ENCODE measurements at regions of chr12 and their contacts with region 1.

Region 1: DNA sequence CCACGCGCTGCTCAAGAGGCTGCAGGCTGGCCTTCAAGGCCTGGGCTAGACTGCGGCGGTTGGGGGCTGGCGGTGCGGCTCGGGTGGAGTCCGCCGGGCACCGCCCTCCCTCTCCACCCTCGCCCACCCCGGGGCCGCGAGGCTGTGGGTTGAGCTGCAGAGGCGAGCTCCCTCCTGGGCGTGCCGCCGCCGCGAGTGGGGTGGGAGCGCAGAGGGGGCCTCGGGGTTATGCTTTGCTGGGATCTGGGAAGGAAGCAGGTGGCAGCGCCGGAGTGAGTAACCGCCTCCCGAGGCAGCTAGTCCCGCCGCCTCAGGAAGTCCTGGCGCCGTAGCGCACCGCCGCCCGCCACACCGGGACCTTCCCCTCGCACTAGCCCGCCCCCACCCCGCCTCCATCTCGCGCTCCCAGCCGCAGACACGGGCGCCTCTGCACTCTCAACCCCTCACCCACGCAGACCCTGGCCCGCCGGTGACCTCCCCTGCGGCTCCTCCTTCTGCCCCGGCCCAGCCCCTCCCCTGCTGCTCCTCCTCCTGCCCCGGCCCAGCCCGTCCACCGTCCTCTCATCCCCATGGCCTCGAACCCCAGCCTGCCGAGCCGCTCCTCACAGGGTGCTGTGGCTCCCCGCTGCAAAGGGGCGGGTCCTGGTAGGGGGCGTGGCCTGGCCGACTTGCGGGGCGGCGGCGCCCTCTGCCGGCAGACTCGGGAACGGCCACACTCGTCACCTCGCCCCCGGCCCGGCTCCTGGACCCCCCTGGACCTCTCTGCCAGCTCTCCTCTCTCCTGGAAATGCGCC is 16.6 kb downstream of the TAMALIN start:
- DNase-seq: peak; percentile 36
- H3K4me3 ChIP-seq: peak overlapping the region; percentile 47 to 54 (median 50)
- H3K27ac ChIP-seq: no peak overlapping the region
- H3K4me1 ChIP-seq: peaks cover 17% of the 10 kb centered on the region
- H3K27me3 ChIP-seq: no peaks in the 10 kb centered on the region
- CTCF ChIP-seq: peak; percentile 58 to 96

Region 2: GRCh38 chr12:51579321-51579850 is 444.0 kb before region 1 on chr12:
- CTCF ChIA-PET with region 1: no interaction called
- dilution Hi-C with region 1: no loop called
- in situ Hi-C with region 1: no loop called
- intact Hi-C with region 1: no loop called
- DNase-seq: no peak
- H3K4me3 ChIP-seq: no peak overlapping the region
- H3K27ac ChIP-seq: no peak overlapping the region
- H3K4me1 ChIP-seq: no peaks in the 10 kb centered on the region
- H3K27me3 ChIP-seq: no peaks in the 10 kb centered on the region
- CTCF ChIP-seq: no peak

Region 3: DNA sequence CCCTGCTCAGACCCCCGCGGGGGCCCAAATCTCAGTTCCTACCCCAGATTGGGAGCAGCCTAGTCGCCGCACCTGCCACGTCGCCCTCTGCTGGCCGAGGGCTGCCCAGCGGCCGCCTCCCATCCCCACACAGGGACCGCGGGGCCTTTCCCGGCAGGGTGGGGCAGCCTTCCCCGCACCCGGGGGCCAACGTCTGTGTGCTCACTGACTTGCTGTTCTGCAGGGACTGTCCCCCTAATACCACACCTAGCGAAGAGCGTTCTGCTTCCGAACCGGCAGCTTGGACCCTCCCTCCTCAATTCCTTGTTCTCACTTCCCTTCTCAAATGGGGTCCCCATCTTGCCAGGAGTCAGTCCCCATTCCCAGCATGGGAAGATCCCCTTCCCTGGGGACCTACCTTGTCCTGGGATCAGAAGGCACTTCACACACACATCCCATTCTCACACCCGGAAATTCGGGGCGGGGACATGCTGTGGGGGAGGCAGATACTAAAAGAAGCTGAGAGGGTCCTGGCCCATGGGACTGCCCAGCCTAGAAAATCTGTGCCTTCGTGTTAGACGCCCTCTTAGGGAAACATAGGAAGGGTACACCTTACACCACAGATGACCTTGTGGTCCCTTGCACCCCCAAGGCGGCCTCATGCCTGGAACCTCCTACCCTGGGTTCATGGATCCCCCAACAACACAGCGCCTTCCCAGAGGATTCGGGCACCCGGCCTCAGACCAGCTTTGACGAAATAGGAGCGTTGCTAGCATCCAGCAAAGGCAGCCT is 99.7 kb before region 1 on chr12:
- CTCF ChIA-PET with region 1: no interaction called
- dilution Hi-C with region 1: no loop called
- in situ Hi-C with region 1: no loop called
- intact Hi-C with region 1: loop called (anchors 1 kb)
- DNase-seq: no peak
- H3K4me3 ChIP-seq: no peak overlapping the region
- H3K27ac ChIP-seq: no peak overlapping the region
- H3K4me1 ChIP-seq: no peaks in the 10 kb centered on the region
- H3K27me3 ChIP-seq: no peaks in the 10 kb centered on the region
- CTCF ChIP-seq: peak; percentile 73 to 91

Region 4: GRCh38 chr12:51994959-51995358 is 28.4 kb before region 1 on chr12:
- CTCF ChIA-PET with region 1: interaction called, 7 read pairs
- dilution Hi-C with region 1: no loop called
- in situ Hi-C with region 1: no loop called
- intact Hi-C with region 1: loop called (anchors 1 kb)
- DNase-seq: no peak
- H3K4me3 ChIP-seq: no peak overlapping the region
- H3K27ac ChIP-seq: no peak overlapping the region
- H3K4me1 ChIP-seq: no peaks in the 10 kb centered on the region
- H3K27me3 ChIP-seq: no peaks in the 10 kb centered on the region
- CTCF ChIP-seq: no peak

Region 5: DNA sequence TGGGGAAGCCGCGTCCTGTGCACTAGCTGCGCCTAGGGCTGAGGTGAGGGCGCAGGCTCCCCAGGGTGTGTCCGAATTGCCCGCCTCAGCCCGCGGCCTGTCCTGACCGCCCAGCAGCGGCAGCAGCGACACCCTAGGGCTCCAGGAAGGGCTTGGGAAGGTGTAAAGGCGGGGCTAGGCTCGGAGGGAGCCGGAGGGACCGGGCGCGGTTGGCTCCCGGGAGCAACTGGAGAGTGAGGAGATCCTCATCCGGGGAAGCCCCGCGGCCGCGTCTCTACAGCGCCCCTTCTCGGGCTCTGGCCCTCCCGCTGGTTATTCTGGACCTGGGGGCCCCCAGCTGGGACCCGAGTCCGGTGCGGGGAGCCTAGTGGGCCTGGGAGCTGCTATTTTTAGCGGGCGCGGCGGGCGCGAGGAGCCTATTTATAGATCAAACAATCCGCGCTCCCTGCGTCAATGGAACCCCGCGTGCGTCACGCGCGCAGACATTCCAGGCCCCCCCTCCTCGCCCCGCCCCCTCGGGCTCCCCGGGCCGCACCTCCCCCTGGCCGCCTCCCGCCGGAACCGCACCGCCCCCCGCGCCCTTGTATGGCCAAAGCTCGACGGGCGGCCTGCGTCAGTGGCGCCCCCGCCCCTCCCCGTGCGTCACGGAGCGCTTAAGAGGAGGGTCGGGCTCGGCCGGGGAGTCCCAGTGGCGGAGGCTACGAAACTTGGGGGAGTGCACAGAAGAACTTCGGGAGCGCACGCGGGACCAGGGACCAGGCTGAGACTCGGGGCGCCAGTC is 27.6 kb after region 1 on chr12 and contains the start of gene NR4A1:
- CTCF ChIA-PET with region 1: interaction called, 20 read pairs
- dilution Hi-C with region 1: no loop called
- in situ Hi-C with region 1: no loop called
- intact Hi-C with region 1: no loop called
- DNase-seq: peak; percentile 86
- H3K4me3 ChIP-seq: peak within 1 kb of the TSS; percentile 51 to 63 (median 59)
- H3K27ac ChIP-seq: peak within 1 kb of the TSS; percentile 51
- H3K4me1 ChIP-seq: peaks cover 24% of the 10 kb centered on the region
- H3K27me3 ChIP-seq: no peaks in the 10 kb centered on the region
- CTCF ChIP-seq: peak in 1 of 2 donors; percentile 1
- total RNA-seq, gene NR4A1: 0.17 to 2.4 TPM

Region 6: DNA sequence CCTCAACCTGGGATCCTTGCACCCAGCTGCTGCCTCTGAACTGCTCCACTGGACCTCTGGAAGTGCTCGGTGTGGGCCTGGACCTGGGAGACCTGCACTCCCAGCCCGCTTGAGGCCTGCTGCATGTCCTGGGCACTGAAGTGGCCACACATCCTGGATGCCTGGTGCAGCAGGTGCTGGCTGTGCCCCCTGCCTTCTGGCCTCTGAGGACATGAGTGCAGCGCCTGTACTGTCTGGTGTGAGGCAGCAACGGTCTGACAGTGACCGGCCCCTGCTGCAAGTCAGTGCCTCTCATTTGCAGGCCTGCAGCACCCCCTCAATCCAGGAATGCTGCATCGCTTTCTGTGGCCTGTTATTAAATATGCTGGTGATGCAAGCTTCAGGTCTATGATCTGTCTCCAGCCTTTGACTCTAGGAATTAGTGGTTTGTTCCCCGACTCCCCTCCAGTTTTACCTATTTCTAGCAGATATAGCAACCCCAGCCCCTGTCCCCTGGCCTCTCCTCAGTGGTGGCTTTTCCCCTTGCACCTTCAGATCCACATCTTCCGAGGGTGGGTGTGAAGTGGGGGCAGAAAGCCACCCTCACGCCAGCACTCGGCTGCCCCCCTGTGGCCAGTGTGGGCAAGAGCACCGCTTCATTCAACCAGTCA is 59.7 kb after region 1 on chr12:
- CTCF ChIA-PET with region 1: interaction called, 9 read pairs
- dilution Hi-C with region 1: no loop called
- in situ Hi-C with region 1: loop called (anchors 5 kb)
- intact Hi-C with region 1: loop called (anchors 1 kb)
- DNase-seq: no peak
- H3K4me3 ChIP-seq: no peak overlapping the region
- H3K27ac ChIP-seq: no peak overlapping the region
- H3K4me1 ChIP-seq: peaks cover 5% of the 10 kb centered on the region
- H3K27me3 ChIP-seq: no peaks in the 10 kb centered on the region
- CTCF ChIP-seq: peak; percentile 98 to 99

Measured in mammary epithelial cell (primary cell).